ENCODE measurements at regions of chr17 and their contacts with region 1.

Region 1: DNA sequence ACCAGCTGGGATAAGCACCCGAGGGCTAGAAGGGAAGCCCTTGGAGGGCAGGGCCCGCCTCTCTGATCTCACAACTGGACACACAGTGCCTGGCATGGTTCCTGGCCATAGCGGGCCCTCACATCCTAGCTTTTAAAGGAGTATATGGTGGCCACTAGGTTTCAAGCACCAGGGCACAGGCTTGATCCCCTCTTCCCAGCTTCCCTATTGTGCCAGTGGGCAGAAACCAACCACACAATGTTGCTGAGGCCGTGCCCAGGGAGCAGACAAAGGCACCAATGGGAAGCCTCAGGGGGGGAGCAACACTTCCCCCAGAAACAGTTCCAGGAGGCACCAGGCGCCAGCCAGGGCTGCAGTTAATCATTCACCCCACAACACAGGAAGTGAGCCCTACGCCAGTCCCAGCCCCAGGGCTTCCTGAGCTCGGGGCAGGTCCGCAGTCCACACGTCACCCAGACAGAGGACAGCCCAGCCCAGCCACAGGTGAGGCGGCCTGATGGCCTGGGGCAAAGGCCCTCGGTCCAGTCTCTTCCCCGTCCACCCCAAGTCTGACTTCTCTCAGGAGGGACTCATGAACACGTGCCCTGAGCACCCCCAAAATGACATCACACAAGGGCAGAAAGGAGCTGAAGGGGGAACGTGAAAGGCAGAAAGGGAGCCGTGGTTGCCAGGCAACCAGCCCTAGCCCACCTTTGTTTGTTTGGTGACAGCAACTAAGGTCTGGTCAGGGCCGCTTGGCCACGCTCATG is 12.8 kb downstream of the SMIM5 start:
- DNase-seq: peak; percentile 96
- ATAC-seq: peak; percentile 100
- H3K4me3 ChIP-seq: peak overlapping the region; percentile 45 to 67 (median 48); a peak in 5 of 6 replicates
- H3K27ac ChIP-seq: peak overlapping the region; percentile 85
- H3K4me1 ChIP-seq: peaks cover 25% of the 10 kb centered on the region
- H3K27me3 ChIP-seq: no peaks in the 10 kb centered on the region
- CTCF ChIP-seq: peak; percentile 52
- EP300 ChIP-seq: no peak
- POLR2A ChIP-seq: peak; percentile 90 to 93
- RAD21 ChIP-seq: no peak

Region 2: DNA sequence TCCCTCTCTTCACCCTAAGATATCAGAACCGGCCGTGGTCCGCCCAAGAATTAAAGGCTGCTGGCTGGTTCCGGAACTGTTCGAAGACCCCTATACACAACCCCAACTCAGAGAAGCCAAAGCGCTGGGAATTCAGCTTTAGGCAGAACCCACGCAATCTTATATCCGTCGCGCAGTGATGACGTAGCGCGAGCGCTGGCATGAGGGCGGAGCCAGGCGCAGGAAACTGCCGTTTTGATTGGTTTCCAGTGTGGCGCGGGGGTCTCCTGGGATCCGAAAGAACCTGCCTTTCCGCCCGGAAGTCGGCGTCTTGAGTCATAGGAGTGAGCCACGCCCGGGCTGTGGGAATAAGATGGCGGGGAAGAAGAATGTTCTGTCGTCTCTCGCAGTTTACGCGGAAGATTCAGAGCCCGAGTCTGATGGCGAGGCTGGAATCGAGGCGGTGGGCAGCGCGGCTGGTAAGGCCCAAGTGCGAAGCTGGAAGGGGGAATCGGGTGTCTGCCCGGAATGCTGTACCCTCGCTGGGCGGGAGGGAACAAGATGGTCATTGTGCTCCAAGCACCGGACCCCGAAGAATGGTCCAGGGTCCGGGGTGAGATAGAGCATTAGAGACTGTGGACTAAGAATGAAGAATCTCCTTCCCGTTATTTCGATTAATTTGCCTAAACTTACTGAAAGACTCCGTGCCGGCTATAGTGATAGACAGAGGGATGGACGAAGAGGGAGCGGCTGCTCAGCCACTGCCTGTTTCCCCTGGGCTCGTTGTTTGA is 21.1 kb after region 1 on chr17 and contains the starts of genes RECQL5 and SAP30BP:
- CTCF ChIA-PET with region 1: no interaction called
- POLR2A ChIA-PET with region 1: interaction called, 25 read pairs
- in situ Hi-C with region 1: no loop called
- intact Hi-C with region 1: no loop called
- DNase-seq: peak; percentile 98
- ATAC-seq: peak; percentile 100
- H3K4me3 ChIP-seq: peak within 1 kb of the TSS; percentile 77 to 99 (median 99)
- H3K27ac ChIP-seq: peak within 1 kb of the TSS; percentile 73
- H3K4me1 ChIP-seq: peaks cover 39% of the 10 kb centered on the region
- H3K27me3 ChIP-seq: peaks cover 0 to 5% of the 10 kb centered on the region in 2 experiments; a peak in 1 of 5 replicates
- CTCF ChIP-seq: 0 out of 2 replicates have a peak, but pooled peaks have one; percentile 15
- EP300 ChIP-seq: 0 out of 4 replicates have a peak, but pooled peaks of 1 of the 2 experiments have one; percentile 28
- POLR2A ChIP-seq: peak; percentile 82 to 91
- RAD21 ChIP-seq: 0 out of 2 replicates have a peak, but pooled peaks have one; percentile 10
- total RNA-seq, gene RECQL5: 17.8 and 32.0 TPM in 2 replicates
- total RNA-seq, gene SAP30BP: 99.4 and 109 TPM in 2 replicates

Region 3: GRCh38 chr17:75693500-75694481 is 47.7 kb after region 1 on chr17:
- CTCF ChIA-PET with region 1: no interaction called
- POLR2A ChIA-PET with region 1: no interaction called
- in situ Hi-C with region 1: no loop called
- intact Hi-C with region 1: no loop called
- DNase-seq: no peak
- ATAC-seq: no peak
- H3K4me3 ChIP-seq: no peak overlapping the region
- H3K27ac ChIP-seq: no peak overlapping the region
- H3K4me1 ChIP-seq: peaks cover 24% of the 10 kb centered on the region
- H3K27me3 ChIP-seq: no peaks in the 10 kb centered on the region
- CTCF ChIP-seq: no peak
- EP300 ChIP-seq: no peak
- POLR2A ChIP-seq: no peak
- RAD21 ChIP-seq: no peak